ENCODE measurements at regions of chr7 and their contacts with region 1.

Region 1: DNA sequence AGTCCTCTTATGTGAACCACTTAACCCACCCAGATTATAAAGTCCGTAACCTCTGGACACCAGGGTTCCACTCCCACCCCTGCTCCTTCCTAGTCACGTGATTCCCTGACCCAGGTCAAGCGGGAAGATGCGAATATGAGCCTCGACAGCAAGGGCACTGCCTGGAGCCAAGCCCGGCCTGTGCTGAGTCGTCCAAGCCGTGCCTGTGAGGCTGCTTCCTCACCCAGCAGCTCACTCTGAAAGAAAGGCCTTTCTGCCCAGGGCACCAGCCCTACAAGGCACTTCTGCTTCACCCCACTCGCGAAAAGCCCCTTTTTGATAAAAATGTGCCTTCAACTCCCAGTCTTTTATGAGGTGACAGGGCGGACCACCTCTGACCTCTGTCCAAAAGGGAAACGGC is 85.8 kb downstream of the CYTH3 start:
- DNase-seq: no peak
- H3K4me3 ChIP-seq: no peak overlapping the region
- CTCF ChIP-seq: no peak

Region 2: DNA sequence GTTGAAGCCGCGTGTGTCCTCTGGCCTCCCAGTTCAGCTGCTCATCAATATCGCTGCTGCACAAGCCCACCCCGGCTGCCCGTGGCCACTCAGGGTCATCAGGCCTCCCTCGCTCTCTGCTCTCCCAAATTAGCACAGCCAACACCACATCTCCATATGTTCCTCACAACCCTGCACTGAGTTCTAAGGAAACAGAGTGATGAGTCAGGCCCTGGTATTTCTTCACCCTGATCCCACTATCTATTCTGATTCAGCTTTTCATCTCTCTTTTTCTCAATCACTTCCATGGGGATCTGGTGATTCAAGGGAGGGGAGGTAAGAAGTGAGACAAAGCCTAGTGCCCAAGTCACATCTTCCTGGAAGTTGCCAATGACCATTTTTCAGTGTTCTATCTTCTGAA is 62.0 kb after region 1 on chr7:
- in situ Hi-C with region 1: loop called (anchors 5 kb)
- DNase-seq: no peak
- H3K4me3 ChIP-seq: no peak overlapping the region
- CTCF ChIP-seq: no peak

Region 3: DNA sequence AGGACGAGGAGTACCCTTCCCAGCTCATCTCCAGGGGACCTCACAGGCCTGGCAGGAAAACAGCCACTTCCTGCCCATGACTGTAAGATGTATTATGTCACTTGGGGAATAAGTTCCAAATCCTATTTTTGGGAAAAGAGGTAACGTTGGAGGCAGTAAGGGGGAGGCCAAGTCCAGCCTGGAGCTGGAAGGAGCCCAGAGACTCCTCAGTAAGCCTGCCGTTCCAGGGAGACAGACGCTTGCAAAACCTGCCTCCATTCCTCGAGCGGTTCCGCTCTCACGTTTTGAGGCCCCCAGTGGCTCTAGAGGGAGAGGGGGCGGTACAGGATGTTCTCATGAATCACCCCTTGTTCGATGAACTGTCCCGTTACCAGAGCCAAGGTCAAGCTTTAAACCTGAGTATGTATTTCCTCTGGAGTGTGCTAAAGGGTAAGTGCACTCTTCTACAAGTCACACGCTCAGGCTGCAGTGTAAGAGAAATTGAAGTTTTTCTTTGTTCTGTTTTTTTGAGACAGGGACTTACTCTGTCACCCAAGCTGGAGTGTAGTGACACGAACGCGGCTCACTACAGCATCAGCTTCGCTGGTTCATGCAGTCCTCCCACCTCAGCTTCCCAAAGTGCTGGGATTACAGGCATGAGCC is 131.3 kb after region 1 on chr7:
- in situ Hi-C with region 1: loop called (anchors 5 kb)
- DNase-seq: no peak
- H3K4me3 ChIP-seq: no peak overlapping the region
- CTCF ChIP-seq: no peak